ENCODE measurements at regions of chr9 and their contacts with region 1.

Region 1: GRCh38 chr9:4143936-4144717 is 155.7 kb downstream of the GLIS3 start:
- DNase-seq: no peak
- H3K4me3 ChIP-seq: no peak overlapping the region
- H3K27ac ChIP-seq: peak overlapping the region in 3 of 4 donors; percentile 48 to 67 (median 57)
- H3K4me1 ChIP-seq: peaks cover 0 to 34% (median 23%) of the 10 kb centered on the region in 4 donors
- H3K27me3 ChIP-seq: no peaks in the 10 kb centered on the region
- CTCF ChIP-seq: no peak
- EP300 ChIP-seq: no peak
- POLR2A ChIP-seq: no peak

Region 2: DNA sequence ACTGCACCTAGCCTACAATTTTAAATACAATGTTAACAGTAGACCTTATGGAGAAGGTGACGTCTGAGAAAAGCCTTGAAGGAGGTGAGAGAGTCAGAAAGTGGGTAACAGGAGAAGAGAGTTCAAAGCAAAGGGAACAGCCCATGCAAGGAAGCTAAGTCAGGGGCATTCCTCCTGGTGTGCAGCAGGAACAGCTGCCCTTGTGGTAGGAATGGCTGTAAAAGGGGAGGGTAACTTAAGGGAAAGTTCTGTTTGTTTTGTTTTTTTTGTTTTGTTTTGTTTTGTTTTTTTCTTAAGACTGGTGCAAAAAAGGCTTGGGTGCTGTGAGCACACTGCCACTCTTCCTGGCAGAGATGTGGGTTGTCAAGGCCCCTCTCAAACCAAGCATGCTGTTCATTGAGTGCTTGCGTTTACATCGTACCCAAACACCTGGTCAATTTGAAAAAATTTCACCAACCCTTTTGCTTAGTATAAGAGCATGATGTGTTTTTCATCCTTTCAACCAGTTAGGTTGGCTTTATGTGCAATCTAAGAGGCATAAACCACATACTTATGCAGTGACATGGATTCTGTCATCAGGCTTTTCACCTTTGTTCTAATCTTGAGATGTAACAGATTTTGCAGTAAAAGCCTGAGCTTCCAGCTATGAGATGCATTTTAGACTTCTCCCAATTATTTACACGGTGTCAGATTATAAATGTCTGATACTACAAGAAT is 123.9 kb before region 1 on chr9:
- intact Hi-C with region 1: no loop called
- DNase-seq: no peak
- H3K4me3 ChIP-seq: no peak overlapping the region
- H3K27ac ChIP-seq: peak overlapping the region in 2 of 4 donors; percentile 37 to 51
- H3K4me1 ChIP-seq: peaks cover 0 to 37% (median 32%) of the 10 kb centered on the region in 4 donors
- H3K27me3 ChIP-seq: no peaks in the 10 kb centered on the region
- CTCF ChIP-seq: no peak
- EP300 ChIP-seq: peak in 1 of 4 donors; percentile 3
- POLR2A ChIP-seq: no peak

Region 3: GRCh38 chr9:4099976-4100735 is 44.0 kb before region 1 on chr9:
- intact Hi-C with region 1: loop called (anchors 10 kb)
- DNase-seq: no peak
- H3K4me3 ChIP-seq: no peak overlapping the region
- H3K27ac ChIP-seq: no peak overlapping the region
- H3K4me1 ChIP-seq: peaks cover 0 to 43% (median 26%) of the 10 kb centered on the region in 4 donors
- H3K27me3 ChIP-seq: no peaks in the 10 kb centered on the region
- CTCF ChIP-seq: no peak
- EP300 ChIP-seq: no peak
- POLR2A ChIP-seq: no peak